Activated CD4-positive, alpha-beta memory T cell treated with anti-CD3 and anti-CD28 coated beads for 36 hours (primary cell): ENCODE measurements at regions of chr7 and their contacts with region 1.

Region 1: GRCh38 chr7:140358412-140359051 is 39.8 kb downstream of the SLC37A3 start:
- DNase-seq: peak; percentile 69
- H3K4me3 Mint-ChIP-seq: peak overlapping the region; percentile 46
- H3K27ac Mint-ChIP-seq: peak overlapping the region; percentile 97
- H3K4me1 Mint-ChIP-seq: peaks cover 34% of the 10 kb centered on the region
- H3K27me3 Mint-ChIP-seq: no peaks in the 10 kb centered on the region

Region 2: GRCh38 chr7:140390466-140391190 is 32.1 kb after region 1 on chr7:
- CTCF ChIA-PET with region 1: no interaction called
- POLR2A ChIA-PET with region 1: interaction called, 11 read pairs
- intact Hi-C with region 1: no loop called
- DNase-seq: peak; percentile 65
- H3K4me3 Mint-ChIP-seq: no peak overlapping the region
- H3K27ac Mint-ChIP-seq: no peak overlapping the region
- H3K4me1 Mint-ChIP-seq: peaks cover 10% of the 10 kb centered on the region
- H3K27me3 Mint-ChIP-seq: no peaks in the 10 kb centered on the region

Region 3: GRCh38 chr7:140439359-140439758 is 80.8 kb after region 1 on chr7:
- CTCF ChIA-PET with region 1: interaction called, 4 read pairs
- POLR2A ChIA-PET with region 1: no interaction called
- intact Hi-C with region 1: loop called (anchors 1 kb)
- DNase-seq: no peak
- H3K4me3 Mint-ChIP-seq: no peak overlapping the region
- H3K27ac Mint-ChIP-seq: peak overlapping the region; percentile 88
- H3K4me1 Mint-ChIP-seq: peaks cover 13% of the 10 kb centered on the region
- H3K27me3 Mint-ChIP-seq: no peaks in the 10 kb centered on the region

Region 4: GRCh38 chr7:140564643-140565042 is 206.1 kb after region 1 on chr7:
- CTCF ChIA-PET with region 1: no interaction called
- POLR2A ChIA-PET with region 1: no interaction called
- intact Hi-C with region 1: no loop called
- DNase-seq: no peak
- H3K4me3 Mint-ChIP-seq: no peak overlapping the region
- H3K27ac Mint-ChIP-seq: no peak overlapping the region
- H3K4me1 Mint-ChIP-seq: no peaks in the 10 kb centered on the region
- H3K27me3 Mint-ChIP-seq: no peaks in the 10 kb centered on the region